ENCODE measurements at regions of chr5 and their contacts with region 1.

Region 1: GRCh38 chr5:50606179-50606578 is 60.3 kb upstream of the PARP8 start:
- DNase-seq: peak; percentile 30
- H3K4me3 Mint-ChIP-seq: no peak overlapping the region
- H3K27ac Mint-ChIP-seq: peak overlapping the region; percentile 55
- H3K4me1 Mint-ChIP-seq: peaks cover 24% of the 10 kb centered on the region
- H3K27me3 Mint-ChIP-seq: no peaks in the 10 kb centered on the region
- CTCF ChIP-seq: no peak

Region 2: DNA sequence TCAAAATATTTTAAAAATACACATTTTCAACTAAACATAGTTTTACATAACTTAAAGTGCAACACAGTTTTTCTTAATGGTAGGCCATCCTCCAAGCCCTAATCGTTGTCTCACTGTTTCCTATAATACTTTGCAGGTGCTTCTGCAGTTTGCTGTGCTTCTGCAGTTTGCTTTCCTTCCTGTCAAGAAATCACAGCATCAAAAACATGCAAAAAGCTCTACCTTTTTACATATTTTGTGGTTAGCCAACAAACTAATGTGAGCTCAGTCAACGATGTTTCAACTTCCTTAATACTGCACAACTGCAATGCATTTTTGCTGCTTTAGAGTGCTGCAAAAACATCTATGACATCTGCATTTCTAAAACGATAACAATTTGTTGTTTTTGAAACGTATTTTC is 190.3 kb before region 1 on chr5:
- CTCF ChIA-PET with region 1: no interaction called
- intact Hi-C with region 1: no loop called
- DNase-seq: no peak
- H3K4me3 Mint-ChIP-seq: no peak overlapping the region
- H3K27ac Mint-ChIP-seq: no peak overlapping the region
- H3K4me1 Mint-ChIP-seq: peaks cover 8% of the 10 kb centered on the region
- H3K27me3 Mint-ChIP-seq: no peaks in the 10 kb centered on the region
- CTCF ChIP-seq: no peak

Region 3: GRCh38 chr5:50595199-50595598 is 11.0 kb before region 1 on chr5:
- CTCF ChIA-PET with region 1: interaction called, 10 read pairs
- intact Hi-C with region 1: no loop called
- DNase-seq: no peak
- H3K4me3 Mint-ChIP-seq: no peak overlapping the region
- H3K27ac Mint-ChIP-seq: peak overlapping the region; percentile 60
- H3K4me1 Mint-ChIP-seq: peaks cover 45% of the 10 kb centered on the region
- H3K27me3 Mint-ChIP-seq: no peaks in the 10 kb centered on the region
- CTCF ChIP-seq: no peak

Region 4: DNA sequence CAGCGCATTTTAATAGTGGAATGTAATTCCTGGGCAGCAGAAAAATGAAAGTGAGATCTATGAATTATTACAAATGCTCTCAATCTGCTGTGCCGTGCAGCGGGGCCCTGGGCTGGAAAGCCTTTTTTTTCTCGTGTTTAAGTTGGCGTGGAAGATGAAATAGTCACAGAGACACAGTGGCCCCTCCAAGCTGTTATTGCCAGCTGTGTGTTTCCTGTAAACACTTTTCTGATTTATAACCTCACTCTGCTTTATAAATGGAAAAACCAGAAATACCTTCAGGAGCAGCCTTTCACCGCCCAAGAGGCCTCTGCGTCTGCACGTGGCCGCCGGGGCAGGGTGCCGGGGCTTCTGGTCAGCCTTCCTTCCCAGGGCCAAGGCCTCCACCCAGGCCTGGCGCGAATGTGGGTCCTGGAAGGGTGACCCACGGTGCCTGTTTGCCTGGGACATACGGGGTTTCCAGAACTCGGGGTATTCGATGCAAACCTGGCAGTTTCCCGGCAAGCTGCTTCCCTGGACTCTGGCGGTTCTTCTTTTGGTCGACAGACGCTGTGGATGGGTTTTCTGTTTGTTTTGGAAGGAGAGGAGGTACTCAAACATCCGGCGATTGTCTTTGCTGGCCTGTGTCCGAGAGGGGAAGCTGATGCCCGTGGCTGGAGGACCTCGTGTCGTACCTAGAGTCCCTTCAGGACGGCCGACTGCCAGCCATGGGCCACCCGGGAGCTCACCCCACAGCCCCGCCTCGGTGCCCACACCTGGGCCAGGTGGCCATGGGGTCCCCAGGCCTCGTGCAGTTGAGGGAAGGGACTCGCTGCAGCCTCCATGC is 317.0 kb after region 1 on chr5:
- CTCF ChIA-PET with region 1: no interaction called
- intact Hi-C with region 1: no loop called
- DNase-seq: no peak
- H3K4me3 Mint-ChIP-seq: peak overlapping the region; percentile 56
- H3K27ac Mint-ChIP-seq: no peak overlapping the region
- H3K4me1 Mint-ChIP-seq: no peaks in the 10 kb centered on the region
- H3K27me3 Mint-ChIP-seq: no peaks in the 10 kb centered on the region
- CTCF ChIP-seq: no peak

Region 5: GRCh38 chr5:51033215-51033614 is 427.0 kb after region 1 on chr5:
- CTCF ChIA-PET with region 1: no interaction called
- intact Hi-C with region 1: no loop called
- DNase-seq: peak; percentile 21
- H3K4me3 Mint-ChIP-seq: no peak overlapping the region
- H3K27ac Mint-ChIP-seq: no peak overlapping the region
- H3K4me1 Mint-ChIP-seq: peaks cover 9% of the 10 kb centered on the region
- H3K27me3 Mint-ChIP-seq: no peaks in the 10 kb centered on the region
- CTCF ChIP-seq: no peak